B cell (primary cell): ENCODE measurements at regions of chr3 and their contacts with region 1.

Region 1: DNA sequence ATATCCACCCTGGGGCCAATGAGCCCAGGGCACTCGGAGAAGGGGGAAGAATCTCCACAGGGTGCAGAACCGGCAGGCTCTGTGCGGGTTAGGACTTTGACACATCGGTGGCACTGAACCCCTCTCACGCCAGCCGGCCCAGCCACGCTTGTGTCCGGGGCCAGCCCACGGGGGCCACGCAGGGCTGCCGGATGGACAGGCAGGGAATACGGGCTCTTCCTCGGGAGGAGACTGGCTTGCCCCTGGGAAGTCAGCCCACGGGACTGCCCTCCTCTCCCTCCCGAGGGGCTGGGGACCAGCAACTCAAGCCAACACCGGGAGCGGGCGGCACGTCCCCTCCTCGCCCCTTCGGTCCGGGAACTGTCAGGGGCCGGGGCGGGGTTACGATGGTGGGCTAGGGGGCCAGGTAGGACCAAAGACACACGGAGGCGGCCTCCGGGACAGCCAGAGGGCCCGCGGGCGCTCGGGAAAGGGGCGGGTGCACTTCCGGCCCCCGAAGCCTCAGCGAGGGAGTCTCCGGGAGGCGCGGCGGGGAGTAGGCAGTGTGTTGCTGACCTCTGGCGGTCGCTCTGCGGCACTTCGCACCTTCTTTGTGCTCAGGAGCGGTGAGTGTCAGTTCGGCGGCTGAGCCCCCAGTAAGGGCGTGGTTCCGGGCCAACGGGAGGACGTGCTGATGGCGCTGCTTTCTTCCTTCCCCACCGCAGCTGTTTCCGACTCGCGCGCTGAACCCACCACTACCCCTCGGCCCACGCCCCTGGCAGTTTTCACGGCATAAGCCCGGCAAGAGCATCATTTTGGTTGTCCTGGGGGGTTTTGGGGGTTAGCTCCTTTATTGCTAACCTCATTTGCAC is 5.1 kb upstream of the CYP8B1 start:
- DNase-seq: peak; percentile 92
- ATAC-seq: peak; percentile 99
- H3K4me3 ChIP-seq: peak overlapping the region in 4 of 5 experiments; percentile 50 to 70 (median 68)
- H3K4me3 Mint-ChIP-seq: peak overlapping the region; percentile 82
- H3K27ac ChIP-seq: peak overlapping the region in 1 of 2 donors; percentile 76
- H3K27ac Mint-ChIP-seq: peak overlapping the region; percentile 83
- H3K4me1 ChIP-seq: peaks cover 10 to 14% of the 10 kb centered on the region in 2 donors
- H3K4me1 Mint-ChIP-seq: peaks cover 7% of the 10 kb centered on the region
- H3K27me3 ChIP-seq: peaks cover 0 to 2% (median 0%) of the 10 kb centered on the region in 4 experiments
- H3K27me3 Mint-ChIP-seq: peaks cover 4% of the 10 kb centered on the region
- CTCF ChIP-seq: peak; percentile 87

Region 2: DNA sequence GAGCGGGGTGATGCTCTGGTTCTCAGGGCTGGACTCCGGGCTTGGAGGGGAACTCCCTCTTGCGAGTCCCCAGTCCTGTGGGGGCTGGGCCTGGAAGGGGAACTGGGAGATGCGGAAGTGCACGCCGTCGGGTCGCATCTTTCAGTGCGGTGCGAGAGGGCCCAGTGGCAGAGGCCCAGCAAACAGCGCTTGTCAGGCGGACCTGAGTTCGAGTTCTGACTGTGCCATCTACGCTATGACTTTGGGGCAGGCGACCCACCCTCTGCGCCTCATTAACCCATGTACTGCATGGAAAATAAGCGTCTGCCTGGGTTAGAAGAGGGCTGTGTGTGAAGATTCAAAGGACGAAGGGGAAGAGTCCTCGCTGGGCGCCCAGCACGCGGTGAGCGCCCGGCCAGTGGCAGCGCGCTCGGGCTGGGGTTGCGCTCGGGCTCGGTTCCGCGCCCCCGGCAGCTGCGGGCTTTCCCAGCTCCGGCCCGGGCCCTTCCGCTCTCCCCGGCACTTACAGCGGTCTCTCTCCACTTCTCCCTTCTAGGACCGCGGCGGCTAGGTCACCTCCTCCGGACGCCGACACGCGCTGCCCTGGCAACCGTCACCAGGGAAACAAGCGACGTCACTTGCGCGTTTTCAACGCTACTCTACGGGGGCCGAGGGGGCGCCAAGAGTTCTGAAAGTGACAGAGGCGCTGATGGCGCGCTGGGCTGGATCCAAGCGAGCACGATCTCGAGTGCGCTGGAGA is 108.0 kb before region 1 on chr3 and contains the start of gene CCDC13:
- CTCF ChIA-PET with region 1: interaction called, 72 read pairs
- POLR2A ChIA-PET with region 1: interaction called, 4 read pairs
- intact Hi-C with region 1: loop called (anchors 2 kb)
- DNase-seq: peak; percentile 98
- ATAC-seq: peak; percentile 88
- H3K4me3 ChIP-seq: peak within 1 kb of the TSS; percentile 46 to 87 (median 62)
- H3K4me3 Mint-ChIP-seq: peak within 1 kb of the TSS; percentile 90
- H3K27ac ChIP-seq: peak within 1 kb of the TSS; percentile 66 to 81
- H3K27ac Mint-ChIP-seq: peak within 1 kb of the TSS; percentile 92
- H3K4me1 ChIP-seq: peaks cover 4 to 10% of the 10 kb centered on the region in 2 donors
- H3K4me1 Mint-ChIP-seq: peaks cover 11% of the 10 kb centered on the region
- H3K27me3 ChIP-seq: no peaks in the 10 kb centered on the region
- H3K27me3 Mint-ChIP-seq: no peaks in the 10 kb centered on the region
- CTCF ChIP-seq: no peak
- total RNA-seq, gene CCDC13: 1.9 and 2.5 TPM in 2 replicates

Region 3: GRCh38 chr3:42780892-42781700 is 99.7 kb before region 1 on chr3:
- CTCF ChIA-PET with region 1: interaction called, 72 read pairs
- POLR2A ChIA-PET with region 1: interaction called, 4 read pairs
- intact Hi-C with region 1: loop called (anchors 1 kb)
- DNase-seq: peak; percentile 84
- ATAC-seq: peak; percentile 84
- H3K4me3 ChIP-seq: no peak overlapping the region
- H3K4me3 Mint-ChIP-seq: no peak overlapping the region
- H3K27ac ChIP-seq: no peak overlapping the region
- H3K27ac Mint-ChIP-seq: no peak overlapping the region
- H3K4me1 ChIP-seq: no peaks in the 10 kb centered on the region
- H3K4me1 Mint-ChIP-seq: peaks cover 2% of the 10 kb centered on the region
- H3K27me3 ChIP-seq: no peaks in the 10 kb centered on the region
- H3K27me3 Mint-ChIP-seq: no peaks in the 10 kb centered on the region
- CTCF ChIP-seq: peak; percentile 80

Region 4: DNA sequence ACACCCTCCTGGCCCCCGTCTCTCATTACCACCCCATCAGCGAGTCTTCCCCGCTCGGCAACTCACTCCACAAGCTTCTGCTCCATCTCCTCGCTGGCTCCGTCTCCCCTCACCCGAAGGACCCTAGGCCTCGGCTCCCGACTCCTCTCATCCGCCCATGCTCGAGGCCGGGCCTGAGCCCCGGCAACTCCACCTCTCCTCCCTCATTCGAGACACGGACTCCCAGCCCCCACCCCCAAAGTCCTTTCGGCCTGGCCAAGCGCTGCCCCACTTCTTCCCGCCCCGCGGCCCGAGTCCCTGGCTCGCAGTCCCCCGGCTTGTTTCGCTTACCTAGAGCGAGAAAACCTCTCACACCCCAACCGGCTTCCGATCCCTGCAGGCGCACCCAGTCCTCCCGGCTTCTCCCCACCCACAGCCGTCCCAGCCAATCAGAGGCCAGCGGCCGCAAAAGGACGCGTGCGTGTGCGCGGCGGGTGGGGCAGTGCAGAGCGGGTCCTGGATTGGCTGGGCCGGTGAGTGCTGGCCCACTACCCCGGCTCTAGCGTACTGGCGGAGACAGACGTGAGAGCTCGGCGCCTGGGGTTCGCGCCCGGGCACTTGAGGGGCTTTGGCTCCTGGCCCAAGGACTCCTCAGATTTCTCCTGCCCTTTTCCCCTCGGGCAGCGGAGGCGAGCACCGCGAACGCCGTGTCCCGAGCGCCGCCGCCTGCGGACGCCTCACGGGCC is 76.6 kb before region 1 on chr3 and contains the start of gene HIGD1A:
- CTCF ChIA-PET with region 1: interaction called, 3 read pairs
- POLR2A ChIA-PET with region 1: no interaction called
- intact Hi-C with region 1: loop called (anchors 1 kb)
- DNase-seq: peak; percentile 94
- ATAC-seq: peak; percentile 100
- H3K4me3 ChIP-seq: peak within 1 kb of the TSS; percentile 82 to 89 (median 87)
- H3K4me3 Mint-ChIP-seq: peak within 1 kb of the TSS; percentile 98
- H3K27ac ChIP-seq: peak within 1 kb of the TSS; percentile 70 to 84
- H3K27ac Mint-ChIP-seq: peak within 1 kb of the TSS; percentile 91
- H3K4me1 ChIP-seq: peaks cover 17 to 27% of the 10 kb centered on the region in 2 donors
- H3K4me1 Mint-ChIP-seq: peaks cover 38% of the 10 kb centered on the region
- H3K27me3 ChIP-seq: peaks cover 0 to 2% (median 0%) of the 10 kb centered on the region in 4 experiments
- H3K27me3 Mint-ChIP-seq: peaks cover 19% of the 10 kb centered on the region
- CTCF ChIP-seq: no peak
- total RNA-seq, gene HIGD1A: 16.5 and 18.4 TPM in 2 replicates

Region 5: GRCh38 chr3:42831321-42831713 is 49.5 kb before region 1 on chr3:
- CTCF ChIA-PET with region 1: interaction called, 65 read pairs
- POLR2A ChIA-PET with region 1: no interaction called
- intact Hi-C with region 1: loop called (anchors 1 kb)
- DNase-seq: peak; percentile 81
- ATAC-seq: peak; percentile 76
- H3K4me3 ChIP-seq: no peak overlapping the region
- H3K4me3 Mint-ChIP-seq: no peak overlapping the region
- H3K27ac ChIP-seq: no peak overlapping the region
- H3K27ac Mint-ChIP-seq: no peak overlapping the region
- H3K4me1 ChIP-seq: no peaks in the 10 kb centered on the region
- H3K4me1 Mint-ChIP-seq: peaks cover 4% of the 10 kb centered on the region
- H3K27me3 ChIP-seq: no peaks in the 10 kb centered on the region
- H3K27me3 Mint-ChIP-seq: peaks cover 15% of the 10 kb centered on the region
- CTCF ChIP-seq: peak; percentile 88

Region 6: DNA sequence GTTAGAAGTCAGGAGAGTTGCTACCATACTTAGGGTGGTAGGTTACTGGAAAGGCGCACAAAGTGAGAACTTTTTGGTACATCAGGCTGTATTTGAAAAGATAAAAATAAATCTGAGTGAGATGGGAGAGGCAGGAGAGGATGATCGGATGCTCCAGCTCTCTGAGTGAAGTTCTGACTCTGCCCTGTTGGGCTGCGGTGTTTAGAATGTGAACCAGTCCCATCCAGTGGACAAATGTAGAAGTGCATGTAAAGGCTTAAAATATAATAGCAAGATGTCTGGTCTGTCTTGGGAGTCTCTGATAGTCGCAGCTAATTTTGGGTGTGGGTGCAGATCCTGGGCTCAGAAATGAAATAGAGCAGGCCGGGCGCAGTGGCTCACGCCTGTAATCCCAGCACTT is 41.2 kb before region 1 on chr3:
- CTCF ChIA-PET with region 1: interaction called, 20 read pairs
- POLR2A ChIA-PET with region 1: no interaction called
- intact Hi-C with region 1: loop called (anchors 2 kb)
- DNase-seq: peak; percentile 73
- ATAC-seq: peak; percentile 99
- H3K4me3 ChIP-seq: peak overlapping the region in 1 of 5 experiments; percentile 19
- H3K4me3 Mint-ChIP-seq: peak overlapping the region; percentile 58
- H3K27ac ChIP-seq: no peak overlapping the region
- H3K27ac Mint-ChIP-seq: peak overlapping the region; percentile 46
- H3K4me1 ChIP-seq: peaks cover under 1 to 6% of the 10 kb centered on the region in 2 donors
- H3K4me1 Mint-ChIP-seq: peaks cover 6% of the 10 kb centered on the region
- H3K27me3 ChIP-seq: no peaks in the 10 kb centered on the region
- H3K27me3 Mint-ChIP-seq: no peaks in the 10 kb centered on the region
- CTCF ChIP-seq: peak; percentile 76

Region 7: DNA sequence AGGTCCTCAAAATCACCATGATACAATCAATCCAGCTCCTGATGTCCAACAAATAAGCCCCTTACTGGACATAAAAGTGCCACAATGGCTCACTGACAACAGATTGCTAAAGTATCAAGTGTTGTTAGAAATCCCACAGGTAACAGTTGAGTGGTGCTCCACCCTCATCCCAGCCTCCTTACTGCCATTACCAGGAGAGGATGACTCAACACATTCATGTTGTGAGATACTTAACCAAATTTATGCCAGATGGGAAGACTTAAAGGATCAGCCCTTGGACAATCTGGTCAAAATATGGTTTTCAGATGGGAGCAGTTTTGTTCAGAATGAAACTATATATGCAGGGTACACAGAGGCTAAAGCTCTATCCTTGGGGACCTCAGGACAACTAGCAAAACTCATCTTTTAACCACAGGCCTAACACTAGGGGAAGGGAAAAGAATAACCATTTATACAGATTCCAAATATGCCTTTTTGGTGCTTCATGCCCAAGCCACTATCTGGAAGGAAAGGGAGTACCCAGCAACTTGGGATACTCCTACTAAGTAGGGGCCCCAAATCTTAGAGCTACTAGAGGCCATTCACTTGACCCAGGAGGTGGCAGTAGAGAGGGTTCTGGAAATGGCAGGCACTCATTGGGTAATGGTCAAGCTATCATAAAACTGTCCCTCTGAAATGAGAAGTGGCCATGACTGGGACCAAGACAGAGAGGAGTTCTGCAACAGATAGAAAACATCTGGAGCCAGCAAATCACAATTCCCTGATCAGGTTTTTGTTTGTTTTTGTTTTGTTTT is 18.3 kb after region 1 on chr3:
- CTCF ChIA-PET with region 1: no interaction called
- POLR2A ChIA-PET with region 1: no interaction called
- intact Hi-C with region 1: no loop called
- DNase-seq: no peak
- ATAC-seq: no peak
- H3K4me3 ChIP-seq: no peak overlapping the region
- H3K4me3 Mint-ChIP-seq: no peak overlapping the region
- H3K27ac ChIP-seq: no peak overlapping the region
- H3K27ac Mint-ChIP-seq: no peak overlapping the region
- H3K4me1 ChIP-seq: no peaks in the 10 kb centered on the region
- H3K4me1 Mint-ChIP-seq: no peaks in the 10 kb centered on the region
- H3K27me3 ChIP-seq: peaks cover 0 to 16% (median 3%) of the 10 kb centered on the region in 4 experiments
- H3K27me3 Mint-ChIP-seq: peaks cover 35% of the 10 kb centered on the region
- CTCF ChIP-seq: no peak

Region 8: DNA sequence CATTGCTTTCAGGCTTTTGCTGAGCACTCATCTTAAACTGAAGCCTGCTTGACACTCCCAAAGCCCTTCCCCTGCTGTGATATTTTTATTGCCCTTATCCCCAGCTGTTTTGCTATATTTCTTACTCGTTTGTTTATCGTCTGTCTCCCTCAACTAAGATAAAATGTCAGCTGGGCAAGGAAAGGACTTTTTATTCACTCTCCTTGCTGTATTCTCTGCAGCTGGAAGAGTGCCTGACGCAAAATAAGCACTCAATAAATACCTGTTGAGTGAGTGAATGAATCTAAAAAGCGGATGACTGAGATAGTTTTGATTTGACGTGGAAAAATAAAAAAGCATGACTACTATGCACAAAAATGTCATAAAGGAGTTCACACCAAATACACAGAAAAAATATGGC is 309.8 kb after region 1 on chr3:
- CTCF ChIA-PET with region 1: no interaction called
- POLR2A ChIA-PET with region 1: no interaction called
- intact Hi-C with region 1: no loop called
- DNase-seq: no peak
- ATAC-seq: no peak
- H3K4me3 ChIP-seq: no peak overlapping the region
- H3K4me3 Mint-ChIP-seq: no peak overlapping the region
- H3K27ac ChIP-seq: no peak overlapping the region
- H3K27ac Mint-ChIP-seq: no peak overlapping the region
- H3K4me1 ChIP-seq: no peaks in the 10 kb centered on the region
- H3K4me1 Mint-ChIP-seq: no peaks in the 10 kb centered on the region
- H3K27me3 ChIP-seq: no peaks in the 10 kb centered on the region
- H3K27me3 Mint-ChIP-seq: peaks cover 25% of the 10 kb centered on the region
- CTCF ChIP-seq: no peak